ENCODE measurements at regions of chr1 and their contacts with region 1.

Region 1: GRCh38 chr1:197706601-197707000 is 68.7 kb downstream of the DENND1B start:
- DNase-seq: peak in 1 of 35 experiments; percentile 1
- ATAC-seq: no peak
- H3K4me3 ChIP-seq: no peak overlapping the region
- H3K4me3 Mint-ChIP-seq: no peak overlapping the region
- H3K27ac ChIP-seq: no peak overlapping the region
- H3K27ac Mint-ChIP-seq: no peak overlapping the region
- H3K4me1 ChIP-seq: no peaks in the 10 kb centered on the region
- H3K4me1 Mint-ChIP-seq: peaks cover 16 to 28% (median 18%) of the 10 kb centered on the region in 3 donors
- H3K27me3 ChIP-seq: no peaks in the 10 kb centered on the region
- H3K27me3 Mint-ChIP-seq: no peaks in the 10 kb centered on the region

Region 2: GRCh38 chr1:197731446-197731845 is 24.8 kb after region 1 on chr1:
- CTCF ChIA-PET with region 1: no interaction called
- POLR2A ChIA-PET with region 1: no interaction called
- DNase-seq: no peak
- ATAC-seq: no peak
- H3K4me3 ChIP-seq: no peak overlapping the region
- H3K4me3 Mint-ChIP-seq: no peak overlapping the region
- H3K27ac ChIP-seq: no peak overlapping the region
- H3K27ac Mint-ChIP-seq: no peak overlapping the region
- H3K4me1 ChIP-seq: no peaks in the 10 kb centered on the region
- H3K4me1 Mint-ChIP-seq: peaks cover 10 to 32% (median 28%) of the 10 kb centered on the region in 3 donors
- H3K27me3 ChIP-seq: no peaks in the 10 kb centered on the region
- H3K27me3 Mint-ChIP-seq: no peaks in the 10 kb centered on the region

Region 3: GRCh38 chr1:197761621-197762020 is 55.0 kb after region 1 on chr1:
- CTCF ChIA-PET with region 1: no interaction called
- POLR2A ChIA-PET with region 1: no interaction called
- DNase-seq: no peak
- ATAC-seq: peak in 1 of 4 experiments; percentile 36
- H3K4me3 ChIP-seq: peak overlapping the region in 1 of 2 donors; percentile 23
- H3K4me3 Mint-ChIP-seq: no peak overlapping the region
- H3K27ac ChIP-seq: no peak overlapping the region
- H3K27ac Mint-ChIP-seq: no peak overlapping the region
- H3K4me1 ChIP-seq: peaks cover 0 to 16% of the 10 kb centered on the region in 2 experiments
- H3K4me1 Mint-ChIP-seq: peaks cover 51 to 63% (median 55%) of the 10 kb centered on the region in 3 donors
- H3K27me3 ChIP-seq: no peaks in the 10 kb centered on the region
- H3K27me3 Mint-ChIP-seq: no peaks in the 10 kb centered on the region

Region 4: DNA sequence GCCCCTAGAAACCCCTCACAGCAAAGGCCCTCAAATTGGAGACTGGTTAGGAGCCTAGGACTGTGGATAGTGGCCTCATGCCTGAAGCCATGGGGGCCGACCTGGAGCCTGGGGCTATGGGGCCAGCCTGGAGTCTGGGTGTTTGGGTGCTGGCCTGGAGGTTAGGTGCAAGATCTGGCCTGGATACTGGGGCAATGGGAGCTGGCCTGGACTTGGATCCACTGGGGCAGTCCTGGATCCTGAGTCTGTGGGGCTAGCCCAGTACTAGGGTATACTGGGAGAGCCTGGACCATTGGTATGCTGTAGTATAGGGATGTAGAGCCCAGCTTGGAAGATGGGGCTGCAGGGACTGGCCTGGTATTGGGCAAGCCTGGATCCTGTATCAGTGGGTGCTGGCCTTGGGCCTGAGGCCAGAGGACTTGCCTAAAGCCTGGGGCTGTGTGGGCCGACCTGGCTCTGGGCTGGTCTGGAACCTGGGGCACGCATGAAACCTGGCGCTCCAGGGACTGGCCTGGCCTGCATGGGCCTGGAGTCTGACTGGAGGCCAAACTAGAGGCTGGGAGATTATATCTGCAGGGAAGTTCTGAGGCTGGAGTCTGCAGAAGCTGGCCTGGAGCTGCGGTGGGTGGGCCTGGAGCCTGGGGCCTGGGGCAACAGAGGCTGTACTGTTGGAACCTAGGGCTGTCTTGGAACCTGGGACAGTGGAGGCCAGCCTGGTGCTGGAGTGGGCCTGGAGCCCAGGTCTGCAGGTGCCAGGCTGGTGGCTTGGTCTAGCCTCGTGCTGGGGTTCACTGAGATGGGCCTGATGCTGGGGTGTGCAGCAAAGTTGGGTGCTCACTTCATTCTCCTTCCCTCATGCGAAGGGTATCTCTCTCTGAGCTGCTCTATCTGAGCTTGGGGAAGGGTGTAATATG is 81.3 kb after region 1 on chr1:
- CTCF ChIA-PET with region 1: no interaction called
- POLR2A ChIA-PET with region 1: interaction called in 1 of 2 experiments, 16 read pairs
- DNase-seq: no peak
- ATAC-seq: no peak
- H3K4me3 ChIP-seq: no peak overlapping the region
- H3K4me3 Mint-ChIP-seq: no peak overlapping the region
- H3K27ac ChIP-seq: no peak overlapping the region
- H3K27ac Mint-ChIP-seq: no peak overlapping the region
- H3K4me1 ChIP-seq: no peaks in the 10 kb centered on the region
- H3K4me1 Mint-ChIP-seq: no peaks in the 10 kb centered on the region
- H3K27me3 ChIP-seq: no peaks in the 10 kb centered on the region
- H3K27me3 Mint-ChIP-seq: no peaks in the 10 kb centered on the region

Measured in T-cell (primary cell).